Endothelial cell of umbilical vein (primary cell): ENCODE measurements at regions of chr6 and their contacts with region 1.

Region 1: GRCh38 chr6:116217069-116217468 is 36.8 kb downstream of the TSPYL4 start:
- DNase-seq: peak; percentile 61
- H3K4me3 ChIP-seq: no peak overlapping the region
- H3K27ac ChIP-seq: no peak overlapping the region
- H3K4me1 ChIP-seq: peaks cover 9% of the 10 kb centered on the region
- H3K27me3 ChIP-seq: no peaks in the 10 kb centered on the region
- CTCF ChIP-seq: peak; percentile 15 to 36
- POLR2A ChIP-seq: no peak

Region 2: DNA sequence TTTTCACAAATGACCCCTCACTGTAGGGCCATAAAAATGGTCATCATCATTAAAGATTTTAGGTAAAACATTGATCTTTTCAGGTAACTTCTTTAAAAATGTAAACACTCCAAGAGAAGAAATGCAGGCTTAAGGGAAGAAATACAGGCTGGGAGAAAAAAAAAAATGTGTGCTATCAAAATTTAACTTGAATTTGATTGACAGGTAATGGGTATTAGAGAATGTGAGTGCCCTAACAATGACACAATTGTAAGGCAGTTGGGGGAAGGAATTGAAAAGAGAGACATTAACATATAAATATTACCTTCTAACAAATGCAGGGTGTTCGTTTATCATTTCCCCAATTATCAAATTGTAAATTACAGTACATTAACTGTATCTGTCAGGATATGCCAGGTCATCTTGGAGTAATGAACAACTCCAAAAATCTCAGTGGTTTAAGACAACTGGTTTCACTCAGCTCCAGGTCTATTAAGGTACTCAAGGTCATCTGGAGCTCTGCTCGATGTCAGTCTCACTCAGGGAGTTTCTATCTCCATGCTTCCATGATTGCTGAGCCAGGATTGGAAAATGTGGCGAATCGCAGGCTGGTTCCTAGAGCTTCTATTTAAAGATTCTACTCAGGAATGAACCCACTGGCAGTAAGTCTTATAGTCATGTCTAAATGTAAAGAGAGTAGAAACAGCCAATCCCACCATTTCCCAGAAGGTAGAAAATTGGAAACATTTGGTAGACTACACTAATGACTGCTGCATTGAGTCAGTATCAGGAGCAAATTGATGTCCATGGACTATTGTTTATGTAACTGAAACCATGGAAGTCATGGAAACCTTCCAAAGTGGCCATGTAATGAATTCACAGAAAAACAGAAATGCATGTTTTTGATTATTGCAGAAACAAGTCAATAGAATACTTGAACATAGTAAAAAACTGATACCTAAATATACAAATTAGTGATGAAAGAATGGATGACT is 211.9 kb before region 1 on chr6:
- CTCF ChIA-PET with region 1: no interaction called
- POLR2A ChIA-PET with region 1: no interaction called
- dilution Hi-C with region 1: no loop called
- intact Hi-C with region 1: no loop called
- DNase-seq: no peak
- H3K4me3 ChIP-seq: no peak overlapping the region
- H3K27ac ChIP-seq: no peak overlapping the region
- H3K4me1 ChIP-seq: peaks cover 11% of the 10 kb centered on the region
- H3K27me3 ChIP-seq: no peaks in the 10 kb centered on the region
- CTCF ChIP-seq: no peak
- POLR2A ChIP-seq: no peak

Region 3: DNA sequence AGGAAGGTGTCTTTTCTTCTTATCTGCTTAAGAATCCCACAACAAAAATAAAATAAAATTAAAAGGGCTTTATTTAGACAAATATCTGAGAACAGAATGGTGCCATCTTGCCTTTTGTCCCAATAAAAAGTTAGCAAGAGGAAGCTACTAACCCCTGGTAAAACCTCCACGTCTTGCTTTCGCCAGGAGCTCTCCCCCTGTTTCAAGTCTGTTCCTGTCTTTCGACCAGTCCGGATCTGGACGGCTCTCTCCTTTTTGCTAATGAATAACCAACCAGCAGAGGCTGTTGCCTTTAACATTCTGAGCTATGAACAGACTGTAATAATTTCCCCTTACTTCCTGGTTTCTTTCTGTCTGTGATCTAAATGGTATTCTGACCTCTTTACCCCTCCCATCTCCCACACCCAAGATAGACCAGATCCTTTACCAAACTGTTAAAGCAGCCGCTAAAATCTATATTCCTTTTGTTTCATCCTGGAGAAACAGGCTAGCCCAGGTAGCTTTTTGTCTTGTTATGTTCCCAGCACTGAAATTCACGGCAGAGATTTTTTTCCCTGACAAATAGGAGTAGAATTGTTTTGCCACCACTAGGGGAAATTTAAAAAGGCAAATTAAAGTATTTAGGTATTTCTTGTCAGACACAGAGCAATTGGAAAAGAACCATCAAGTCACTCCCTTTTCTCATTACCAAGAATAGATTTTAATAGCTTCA is 156.3 kb before region 1 on chr6 and contains the start of gene FRK:
- CTCF ChIA-PET with region 1: no interaction called
- POLR2A ChIA-PET with region 1: no interaction called
- dilution Hi-C with region 1: no loop called
- intact Hi-C with region 1: no loop called
- DNase-seq: peak; percentile 47
- H3K4me3 ChIP-seq: no peak within 1 kb of the TSS
- H3K27ac ChIP-seq: no peak within 1 kb of the TSS
- H3K4me1 ChIP-seq: no peaks in the 10 kb centered on the region
- H3K27me3 ChIP-seq: no peaks in the 10 kb centered on the region
- CTCF ChIP-seq: no peak
- POLR2A ChIP-seq: no peak
- total RNA-seq, gene FRK: 0.05 TPM in 1 of 2 replicates, not detected in the other

Region 4: GRCh38 chr6:116229287-116229913 is 12.3 kb after region 1 on chr6:
- CTCF ChIA-PET with region 1: interaction called, 22 read pairs
- POLR2A ChIA-PET with region 1: no interaction called
- dilution Hi-C with region 1: no loop called
- intact Hi-C with region 1: no loop called
- DNase-seq: peak; percentile 58
- H3K4me3 ChIP-seq: no peak overlapping the region
- H3K27ac ChIP-seq: no peak overlapping the region
- H3K4me1 ChIP-seq: no peaks in the 10 kb centered on the region
- H3K27me3 ChIP-seq: no peaks in the 10 kb centered on the region
- CTCF ChIP-seq: no peak
- POLR2A ChIP-seq: no peak

Region 5: GRCh38 chr6:116253505-116254296 is 36.6 kb after region 1 on chr6 and contains the start of gene TSPYL4:
- CTCF ChIA-PET with region 1: interaction called, 90 read pairs
- POLR2A ChIA-PET with region 1: interaction called, 3 read pairs
- dilution Hi-C with region 1: no loop called
- intact Hi-C with region 1: loop called (anchors 1 kb)
- DNase-seq: peak; percentile 98
- H3K4me3 ChIP-seq: peak within 1 kb of the TSS; percentile 40 to 95 (median 77)
- H3K27ac ChIP-seq: peak within 1 kb of the TSS; percentile 98
- H3K4me1 ChIP-seq: peaks cover 53% of the 10 kb centered on the region
- H3K27me3 ChIP-seq: no peaks in the 10 kb centered on the region
- CTCF ChIP-seq: no peak
- POLR2A ChIP-seq: peak; percentile 83
- total RNA-seq, gene TSPYL4: 24.5 and 34.4 TPM in 2 replicates

Region 6: DNA sequence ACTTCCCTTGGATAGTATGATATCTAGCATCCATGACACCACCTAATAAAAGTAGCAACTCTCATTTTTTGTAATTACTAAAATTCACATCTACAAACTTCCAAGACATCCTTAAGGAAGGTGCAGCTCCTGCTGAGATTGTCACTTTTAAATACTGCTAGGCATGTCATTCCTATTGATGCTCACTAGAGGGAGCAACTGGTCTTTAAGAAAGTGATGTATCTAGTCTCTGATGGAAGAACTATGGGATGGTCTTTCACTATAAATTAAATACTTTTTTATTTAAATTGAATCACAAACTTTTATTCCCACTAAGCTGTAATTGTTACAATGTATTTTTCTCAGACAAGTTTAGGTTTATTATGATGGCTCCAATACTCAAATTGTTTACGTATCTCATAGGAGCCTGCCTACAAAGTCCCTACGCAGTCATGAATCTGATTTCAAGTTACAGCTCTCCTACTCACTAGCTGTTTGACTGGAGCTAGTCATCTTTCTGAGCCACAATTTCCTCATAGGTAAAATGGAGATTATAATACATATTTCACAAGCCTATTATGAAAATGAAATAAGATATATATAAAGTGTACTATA is 70.7 kb after region 1 on chr6:
- CTCF ChIA-PET with region 1: interaction called, 20 read pairs
- POLR2A ChIA-PET with region 1: no interaction called
- dilution Hi-C with region 1: no loop called
- intact Hi-C with region 1: no loop called
- DNase-seq: peak; percentile 65
- H3K4me3 ChIP-seq: no peak overlapping the region
- H3K27ac ChIP-seq: no peak overlapping the region
- H3K4me1 ChIP-seq: no peaks in the 10 kb centered on the region
- H3K27me3 ChIP-seq: no peaks in the 10 kb centered on the region
- CTCF ChIP-seq: peak; percentile 57
- POLR2A ChIP-seq: no peak

Region 7: DNA sequence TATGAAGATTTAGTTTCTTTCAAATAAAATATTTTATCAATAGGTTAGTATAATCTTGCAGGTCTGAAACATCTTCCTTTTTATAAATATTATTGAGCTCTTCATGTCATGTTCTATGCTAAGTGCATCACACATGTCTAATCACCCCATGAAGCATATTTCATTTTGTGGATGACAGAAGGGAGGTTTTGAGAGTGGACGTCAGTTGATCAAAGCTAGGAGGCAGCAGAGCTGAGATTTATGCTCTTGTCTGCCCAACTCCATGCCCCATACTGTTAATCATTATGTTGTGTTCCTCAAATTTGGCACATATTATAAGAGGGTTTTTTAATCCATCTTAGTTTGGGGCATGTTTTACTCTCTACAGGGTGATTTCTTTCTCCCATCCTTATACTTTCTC is 176.4 kb after region 1 on chr6:
- CTCF ChIA-PET with region 1: no interaction called
- POLR2A ChIA-PET with region 1: no interaction called
- dilution Hi-C with region 1: no loop called
- intact Hi-C with region 1: no loop called
- DNase-seq: no peak
- H3K4me3 ChIP-seq: no peak overlapping the region
- H3K27ac ChIP-seq: no peak overlapping the region
- H3K4me1 ChIP-seq: peaks cover 31% of the 10 kb centered on the region
- H3K27me3 ChIP-seq: no peaks in the 10 kb centered on the region
- CTCF ChIP-seq: no peak
- POLR2A ChIP-seq: no peak

Region 8: DNA sequence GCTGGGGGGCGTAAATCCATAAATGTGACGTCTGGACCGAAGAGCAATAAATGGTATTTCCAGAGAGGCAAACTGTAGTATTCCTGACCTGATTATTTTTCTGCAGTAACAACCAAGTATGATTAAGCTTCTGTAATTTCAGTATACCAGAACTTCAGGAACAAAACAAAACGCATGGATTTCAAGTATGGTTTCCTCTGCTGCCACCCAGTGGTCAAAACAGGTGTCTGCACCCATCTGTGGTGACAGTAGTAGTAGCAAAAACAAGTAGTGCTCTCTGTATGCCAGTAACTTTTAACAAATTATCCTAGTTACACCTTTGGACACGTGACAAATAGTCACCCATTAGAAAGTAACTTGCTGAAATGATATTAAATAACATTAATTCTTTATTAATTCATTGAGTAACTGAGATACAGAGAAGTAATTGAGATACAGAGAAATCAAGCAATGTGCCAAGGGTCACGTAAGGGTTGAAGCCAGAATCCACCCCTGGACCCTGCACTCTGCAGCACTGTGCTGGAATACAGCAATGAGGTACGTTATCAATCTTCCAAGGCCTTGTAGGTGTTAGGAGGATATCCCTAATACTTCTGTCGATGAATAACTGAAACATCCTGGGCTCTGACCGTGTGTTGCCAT is 344.4 kb after region 1 on chr6:
- CTCF ChIA-PET with region 1: interaction called, 33 read pairs
- POLR2A ChIA-PET with region 1: no interaction called
- dilution Hi-C with region 1: no loop called
- intact Hi-C with region 1: loop called (anchors 1 kb)
- DNase-seq: peak; percentile 84
- H3K4me3 ChIP-seq: no peak overlapping the region
- H3K27ac ChIP-seq: no peak overlapping the region
- H3K4me1 ChIP-seq: peaks cover 6% of the 10 kb centered on the region
- H3K27me3 ChIP-seq: no peaks in the 10 kb centered on the region
- CTCF ChIP-seq: peak; percentile 79 to 84
- POLR2A ChIP-seq: no peak

Region 9: GRCh38 chr6:116847227-116847626 is 630.2 kb after region 1 on chr6:
- CTCF ChIA-PET with region 1: interaction called, 5 read pairs
- POLR2A ChIA-PET with region 1: no interaction called
- dilution Hi-C with region 1: no loop called
- intact Hi-C with region 1: loop called (anchors 2 kb)
- DNase-seq: peak; percentile 36
- H3K4me3 ChIP-seq: no peak overlapping the region
- H3K27ac ChIP-seq: no peak overlapping the region
- H3K4me1 ChIP-seq: no peaks in the 10 kb centered on the region
- H3K27me3 ChIP-seq: no peaks in the 10 kb centered on the region
- CTCF ChIP-seq: peak in 1 of 2 donors; percentile 7
- POLR2A ChIP-seq: no peak